Head of caudate nucleus (tissue), 42 donors: ENCODE measurements at regions of chr3 and their contacts with region 1.

Region 1: DNA sequence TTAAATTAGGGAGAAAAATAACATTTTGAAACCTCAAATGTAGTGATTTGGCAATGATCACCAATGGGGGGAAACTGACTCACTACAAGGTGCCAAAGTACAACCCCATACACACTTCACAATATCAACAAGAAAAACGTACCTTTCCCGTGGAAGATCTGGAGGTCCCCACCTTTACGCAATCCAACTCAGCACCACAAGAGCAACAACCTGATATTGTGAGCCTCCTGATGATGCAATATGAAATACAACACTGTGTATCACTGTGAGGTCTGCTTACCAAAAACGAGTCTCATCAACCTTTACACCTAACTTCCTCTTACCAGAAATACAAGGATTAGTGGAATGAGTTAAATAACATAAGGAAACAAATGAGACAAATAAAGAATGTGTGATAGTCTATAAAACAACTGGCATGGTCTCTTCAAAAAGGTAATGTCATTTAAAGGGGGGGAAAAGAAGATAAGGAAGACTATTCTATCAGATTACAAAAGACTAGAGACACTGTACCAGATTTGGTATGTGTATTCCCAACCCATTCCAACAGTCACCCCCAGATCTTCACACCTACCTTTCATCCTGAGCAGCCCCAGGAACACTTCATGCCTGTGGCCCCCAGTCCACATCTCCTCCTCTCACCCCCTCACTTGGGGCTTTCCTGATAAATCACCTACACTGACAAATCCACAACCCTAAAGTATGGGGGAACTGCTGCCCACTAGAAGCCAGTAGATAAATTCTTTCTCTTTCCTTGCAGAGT is 27.7 kb downstream of the DLG1 start:
- DNase-seq: no peak

Region 2: DNA sequence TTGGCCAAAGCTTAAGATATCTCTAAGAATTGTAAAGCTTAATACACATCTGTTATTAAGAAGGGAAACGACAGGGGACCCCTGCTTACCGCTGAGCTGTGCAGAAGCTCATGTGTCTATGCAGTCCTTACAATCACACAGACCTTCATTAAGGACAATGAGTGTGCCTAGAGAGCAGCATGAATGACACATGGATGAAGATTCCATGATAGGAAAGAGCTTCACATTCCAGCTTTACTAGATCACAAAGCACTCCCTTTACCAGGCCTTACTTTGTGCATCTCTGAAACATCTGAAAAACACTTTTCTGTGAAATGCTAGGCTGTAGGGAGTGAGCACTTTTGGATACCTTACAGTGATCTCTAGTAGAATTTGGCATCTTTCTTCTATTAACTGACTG is 799.2 kb before region 1 on chr3:
- intact Hi-C with region 1: no loop called
- DNase-seq: peak in 1 of 42 donors; percentile 10

Region 3: DNA sequence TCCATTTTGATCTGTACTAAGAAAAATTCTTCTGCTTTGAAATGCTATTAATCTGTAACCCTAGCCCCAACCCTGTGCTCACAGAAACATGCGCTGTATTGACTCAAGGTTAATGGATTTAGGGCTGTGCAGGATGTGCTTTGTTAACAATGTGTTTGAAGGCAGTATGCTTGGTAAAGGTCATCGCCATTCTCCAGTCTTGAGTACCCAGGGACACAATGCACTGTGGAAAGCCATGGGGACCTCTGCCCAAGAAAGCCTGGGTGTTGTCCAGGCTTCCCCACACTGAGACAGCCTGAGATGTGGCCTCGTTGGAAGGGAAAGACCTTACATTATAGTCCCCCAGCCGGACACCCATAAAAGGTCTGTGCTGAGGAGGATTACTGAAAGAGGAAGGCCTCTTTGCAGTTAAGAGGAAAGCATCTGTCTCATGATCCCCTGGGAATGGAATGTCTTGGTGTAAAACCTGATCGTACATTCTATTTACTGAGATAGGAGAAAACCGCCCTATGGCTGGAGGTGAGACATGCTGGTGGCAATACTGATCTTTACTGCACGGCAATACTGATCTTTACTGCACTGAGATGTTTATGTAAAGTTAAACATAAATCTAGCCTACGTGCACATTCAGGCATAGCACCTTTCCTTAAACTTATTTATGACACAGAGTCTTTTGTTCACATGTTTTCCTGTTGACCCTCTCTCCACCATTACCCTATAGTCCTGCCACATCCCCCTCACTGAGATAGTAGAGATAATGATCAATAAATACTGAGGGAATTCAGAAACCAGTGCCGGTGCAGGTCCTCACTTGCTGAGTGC is 308.4 kb before region 1 on chr3:
- intact Hi-C with region 1: no loop called
- DNase-seq: peak in 1 of 42 donors; percentile 1

Region 4: DNA sequence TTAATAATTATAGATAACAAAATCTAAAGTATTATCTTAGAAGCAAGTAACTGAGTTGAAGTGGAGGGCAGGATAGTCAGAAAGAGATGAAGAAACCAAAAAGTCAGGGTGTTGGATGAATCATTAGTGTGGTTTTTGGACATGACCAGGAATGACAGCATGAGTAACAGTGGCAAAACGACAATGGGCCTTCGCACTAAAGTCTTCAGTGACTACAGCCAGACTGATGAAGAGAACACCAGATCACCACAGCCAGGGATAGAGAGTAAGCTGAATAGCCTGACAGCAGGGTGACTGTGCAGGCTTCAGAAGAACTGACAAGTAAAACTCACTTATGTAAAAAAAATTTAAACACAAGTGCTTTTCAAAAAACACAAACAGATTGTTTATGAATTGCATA is 145.1 kb before region 1 on chr3:
- intact Hi-C with region 1: no loop called
- DNase-seq: no peak

Region 5: GRCh38 chr3:197289726-197290125 is 19.0 kb after region 1 on chr3:
- intact Hi-C with region 1: loop called (anchors 2 kb)
- DNase-seq: no peak